Activated CD4-positive, alpha-beta memory T cell treated with anti-CD3 and anti-CD28 coated beads, Interleukin-2, amount 10 ng/mL, durations not matched to agents 7 days and 5 days (primary cell): ENCODE measurements at regions of chr17 and their contacts with region 1.

Region 1: DNA sequence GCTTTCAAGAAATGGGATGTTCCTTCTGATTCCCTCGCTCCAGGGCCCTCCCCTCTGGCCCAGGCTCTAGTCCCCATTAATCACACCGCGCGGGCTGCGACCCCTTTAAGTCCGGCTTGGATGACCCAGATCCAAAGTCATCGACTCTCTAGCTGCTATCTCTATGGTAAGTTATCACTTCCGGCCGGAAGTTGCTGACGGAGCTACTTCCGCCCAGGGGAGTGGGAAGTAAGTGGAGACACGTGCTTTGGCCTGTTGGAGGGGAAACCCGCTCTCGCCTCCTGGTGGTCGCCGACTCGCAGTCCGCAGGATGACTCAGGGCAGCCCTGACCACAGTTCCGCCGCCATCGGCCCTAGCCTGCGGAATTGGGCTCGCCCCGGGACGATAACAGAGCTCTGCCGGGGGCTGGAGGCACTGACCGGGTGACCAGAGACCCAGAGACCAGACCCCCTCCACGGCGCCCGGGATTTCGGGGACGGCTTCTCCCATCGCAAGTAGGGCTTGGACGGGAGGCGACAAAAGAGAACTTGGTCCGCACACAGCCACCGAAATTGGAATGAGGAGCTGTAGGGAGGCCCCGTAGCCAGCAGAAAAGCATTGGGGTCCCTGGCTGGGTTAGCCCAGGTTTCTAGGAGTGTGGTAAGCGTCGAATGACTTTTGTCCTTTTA is 52.2 kb upstream of the SEC14L1 start:
- DNase-seq: peak; percentile 91
- H3K4me3 Mint-ChIP-seq: peak overlapping the region; percentile 91
- H3K27ac Mint-ChIP-seq: peak overlapping the region; percentile 95
- H3K4me1 Mint-ChIP-seq: peaks cover 59% of the 10 kb centered on the region
- H3K27me3 Mint-ChIP-seq: peaks cover 1% of the 10 kb centered on the region

Region 2: DNA sequence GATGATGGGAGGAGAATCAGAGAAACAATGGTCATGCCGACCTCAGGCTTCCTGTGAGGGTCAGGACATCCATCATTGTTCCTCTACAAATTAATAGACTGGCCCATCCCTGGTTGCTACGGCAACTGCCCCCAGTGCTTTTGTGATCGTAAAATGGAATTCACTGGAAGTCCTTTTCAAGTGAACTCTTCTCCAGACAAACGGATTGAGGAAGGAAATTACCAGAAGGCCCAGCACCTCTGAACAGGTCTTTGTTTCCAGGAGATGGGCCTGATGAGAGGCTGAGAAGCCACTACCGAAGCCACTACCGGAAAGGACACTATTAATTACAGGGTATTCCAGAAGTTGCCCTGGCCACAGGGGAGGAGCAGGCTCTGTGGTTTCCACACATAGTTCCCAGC is 94.4 kb before region 1 on chr17:
- CTCF ChIA-PET with region 1: no interaction called
- POLR2A ChIA-PET with region 1: no interaction called
- DNase-seq: no peak
- H3K4me3 Mint-ChIP-seq: no peak overlapping the region
- H3K27ac Mint-ChIP-seq: no peak overlapping the region
- H3K4me1 Mint-ChIP-seq: peaks cover 34% of the 10 kb centered on the region
- H3K27me3 Mint-ChIP-seq: no peaks in the 10 kb centered on the region

Region 3: DNA sequence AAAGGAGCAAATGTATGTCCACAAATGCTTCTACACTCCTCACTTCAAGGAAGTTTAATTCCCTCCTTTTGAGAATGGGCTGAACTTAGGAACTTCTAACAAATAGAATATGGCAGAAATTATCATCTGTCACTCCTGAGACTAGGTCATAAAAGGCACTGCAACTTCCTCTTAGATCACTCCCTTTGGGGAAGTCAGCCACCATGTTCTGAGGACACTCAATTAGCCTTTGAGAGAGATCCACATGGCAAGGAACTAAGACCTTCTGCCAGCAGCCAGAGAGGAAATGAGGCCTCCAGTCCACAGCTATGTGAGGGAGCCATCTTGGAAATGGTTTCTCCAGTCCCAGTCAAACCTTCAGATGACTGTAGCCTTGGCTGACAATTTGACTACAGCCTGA is 61.3 kb before region 1 on chr17:
- CTCF ChIA-PET with region 1: no interaction called
- POLR2A ChIA-PET with region 1: no interaction called
- DNase-seq: no peak
- H3K4me3 Mint-ChIP-seq: no peak overlapping the region
- H3K27ac Mint-ChIP-seq: no peak overlapping the region
- H3K4me1 Mint-ChIP-seq: no peaks in the 10 kb centered on the region
- H3K27me3 Mint-ChIP-seq: no peaks in the 10 kb centered on the region

Region 4: DNA sequence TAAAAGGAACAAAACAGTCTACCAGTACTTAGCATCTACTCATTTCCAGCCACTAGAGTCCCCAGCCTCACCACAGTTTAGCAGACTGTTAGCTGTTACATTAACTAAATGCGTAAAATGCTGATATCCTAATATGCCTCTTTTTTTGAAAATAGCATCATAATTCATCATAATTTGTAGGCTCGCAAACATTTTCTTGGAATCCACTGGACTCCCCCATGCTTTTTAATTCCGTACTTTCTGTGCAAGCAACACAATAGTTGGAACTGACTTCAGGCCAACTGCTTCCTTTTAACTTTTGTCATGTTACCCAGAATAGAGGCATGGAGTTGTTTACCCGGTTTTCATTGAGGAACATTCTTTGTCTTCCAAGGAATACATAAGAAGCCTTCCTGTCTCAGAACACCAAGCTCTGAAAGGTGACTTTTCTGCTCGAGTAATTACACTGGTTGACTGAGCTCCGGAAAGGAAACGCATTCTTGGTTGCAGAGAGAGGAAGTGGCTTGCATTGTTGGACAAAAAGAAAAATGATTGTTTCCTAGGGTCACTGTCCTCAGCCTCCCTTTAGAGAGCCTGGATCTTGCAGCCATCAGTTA is 21.3 kb after region 1 on chr17:
- CTCF ChIA-PET with region 1: interaction called, 10 read pairs
- POLR2A ChIA-PET with region 1: no interaction called
- DNase-seq: no peak
- H3K4me3 Mint-ChIP-seq: no peak overlapping the region
- H3K27ac Mint-ChIP-seq: peak overlapping the region; percentile 51
- H3K4me1 Mint-ChIP-seq: peaks cover 35% of the 10 kb centered on the region
- H3K27me3 Mint-ChIP-seq: no peaks in the 10 kb centered on the region

Region 5: GRCh38 chr17:77127735-77128361 is 39.3 kb after region 1 on chr17:
- CTCF ChIA-PET with region 1: interaction called, 21 read pairs
- POLR2A ChIA-PET with region 1: interaction called, 13 read pairs
- DNase-seq: peak; percentile 88
- H3K4me3 Mint-ChIP-seq: peak overlapping the region; percentile 55
- H3K27ac Mint-ChIP-seq: peak overlapping the region; percentile 93
- H3K4me1 Mint-ChIP-seq: peaks cover 55% of the 10 kb centered on the region
- H3K27me3 Mint-ChIP-seq: no peaks in the 10 kb centered on the region

Region 6: GRCh38 chr17:77140166-77140878 is 51.7 kb after region 1 on chr17:
- CTCF ChIA-PET with region 1: interaction called, 19 read pairs
- POLR2A ChIA-PET with region 1: interaction called, 51 read pairs
- DNase-seq: peak; percentile 100
- H3K4me3 Mint-ChIP-seq: peak overlapping the region; percentile 72
- H3K27ac Mint-ChIP-seq: peak overlapping the region; percentile 95
- H3K4me1 Mint-ChIP-seq: peaks cover 66% of the 10 kb centered on the region
- H3K27me3 Mint-ChIP-seq: no peaks in the 10 kb centered on the region

Region 7: DNA sequence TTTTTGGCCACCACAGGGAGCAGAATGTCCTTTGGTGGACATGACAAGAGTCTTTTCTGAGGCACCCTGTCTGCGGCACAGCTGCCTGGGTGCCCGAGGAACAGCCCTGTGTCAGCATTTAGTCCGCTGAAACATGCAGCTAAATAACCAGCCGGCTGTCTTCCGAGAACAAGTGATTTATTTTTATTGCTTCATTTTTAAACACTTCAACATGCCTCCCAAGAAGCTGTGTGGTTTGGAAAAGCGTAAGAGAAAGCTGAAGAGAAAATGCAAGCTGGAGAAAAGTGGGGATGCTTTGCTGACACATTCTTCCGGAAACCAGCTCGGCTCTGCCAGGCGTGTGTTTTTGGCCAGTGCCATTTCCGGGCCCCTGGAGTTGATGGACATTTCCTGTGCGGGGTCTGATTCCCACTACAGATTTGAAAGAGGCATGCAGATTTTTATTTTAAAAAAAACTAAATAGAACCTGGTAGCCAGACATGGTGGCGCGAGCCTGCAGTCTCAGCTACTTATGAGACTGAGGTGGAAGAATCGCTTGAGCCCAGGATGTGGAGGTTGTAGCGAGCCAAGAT is 146.9 kb after region 1 on chr17:
- CTCF ChIA-PET with region 1: interaction called, 24 read pairs
- POLR2A ChIA-PET with region 1: interaction called, 9 read pairs
- DNase-seq: peak; percentile 56
- H3K4me3 Mint-ChIP-seq: peak overlapping the region; percentile 56
- H3K27ac Mint-ChIP-seq: peak overlapping the region; percentile 74
- H3K4me1 Mint-ChIP-seq: peaks cover 25% of the 10 kb centered on the region
- H3K27me3 Mint-ChIP-seq: no peaks in the 10 kb centered on the region

Region 8: DNA sequence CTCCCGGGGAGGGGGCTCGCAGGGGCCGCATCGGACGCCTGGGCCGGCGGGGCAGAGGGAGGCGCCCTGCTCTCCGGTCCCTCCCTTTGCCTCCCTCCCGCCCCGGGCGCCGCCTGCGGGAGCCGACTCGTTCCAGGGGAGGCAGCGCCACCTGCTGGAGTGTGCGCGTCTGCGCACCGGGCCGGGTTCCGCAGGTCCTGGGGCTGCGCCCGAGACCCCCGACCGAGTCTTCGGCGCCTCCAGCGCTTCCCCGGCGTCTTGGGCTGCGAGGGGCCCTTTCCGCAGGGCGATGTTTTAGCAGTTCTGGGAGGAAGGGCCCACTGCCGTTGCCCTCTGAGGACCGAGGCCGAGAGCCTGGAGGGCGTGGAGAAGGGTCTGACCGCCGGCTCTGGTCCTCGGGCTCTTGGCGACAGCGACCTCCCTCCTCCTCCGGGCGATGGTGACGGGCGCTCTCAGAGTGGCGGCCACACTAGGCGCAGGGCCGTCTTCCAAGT is 158.5 kb after region 1 on chr17:
- CTCF ChIA-PET with region 1: interaction called, 25 read pairs
- POLR2A ChIA-PET with region 1: interaction called, 5 read pairs
- DNase-seq: peak; percentile 86
- H3K4me3 Mint-ChIP-seq: peak overlapping the region; percentile 47
- H3K27ac Mint-ChIP-seq: no peak overlapping the region
- H3K4me1 Mint-ChIP-seq: peaks cover 17% of the 10 kb centered on the region
- H3K27me3 Mint-ChIP-seq: peaks cover 21% of the 10 kb centered on the region